Naive thymus-derived CD4-positive, alpha-beta T cell (primary cell): ENCODE measurements at regions of chr15 and their contacts with region 1.

Region 1: DNA sequence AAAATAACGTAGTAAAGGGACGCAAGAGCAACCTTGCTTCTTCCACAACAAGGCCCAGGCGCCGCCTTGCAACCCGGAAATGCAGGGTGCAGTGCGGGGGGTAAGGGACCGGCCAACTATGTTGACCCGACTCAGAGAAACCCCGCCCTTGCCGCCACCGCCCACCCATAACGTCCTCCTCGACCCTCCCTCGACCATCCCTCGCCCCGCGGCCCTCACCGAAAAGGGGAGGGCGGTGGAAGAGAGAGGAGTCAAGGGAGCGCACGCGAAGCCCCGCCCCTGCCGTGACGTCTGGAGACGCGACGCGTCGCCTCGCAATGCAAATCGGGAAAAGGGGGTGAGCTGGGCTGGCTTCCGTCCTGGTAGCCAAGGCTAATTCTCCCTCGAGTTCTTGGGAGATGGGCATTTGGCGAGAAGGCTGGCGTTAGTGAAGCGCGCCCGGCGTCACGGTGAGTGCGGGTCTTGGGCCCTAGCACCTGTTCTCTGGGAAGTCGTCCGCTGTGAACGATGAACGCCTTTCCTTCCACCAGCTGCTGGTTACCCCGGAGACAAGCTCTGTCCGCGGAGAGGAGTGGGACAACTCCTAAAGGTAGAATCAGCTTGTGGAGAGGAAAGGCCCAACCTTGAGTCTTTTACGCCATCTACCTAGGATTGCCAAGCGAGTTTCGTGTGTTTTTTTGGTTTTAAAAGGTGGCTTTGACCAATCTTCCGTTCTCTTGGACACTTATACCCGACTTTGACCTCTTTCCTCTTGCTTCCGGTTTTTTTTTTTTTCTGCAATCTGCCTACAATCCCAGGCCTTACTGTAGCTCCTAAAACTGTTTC is at the start of gene USP8:
- DNase-seq: peak; percentile 88 to 95 (median 93)
- ATAC-seq: peak; percentile 98
- H3K4me3 ChIP-seq: peak within 1 kb of the TSS; percentile 91
- H3K4me3 Mint-ChIP-seq: peak within 1 kb of the TSS; percentile 86 to 100 (median 98)
- H3K27ac ChIP-seq: peak within 1 kb of the TSS; percentile 93
- H3K27ac Mint-ChIP-seq: peak within 1 kb of the TSS; percentile 91 to 99 (median 97)
- H3K4me1 ChIP-seq: peaks cover 8 to 20% of the 10 kb centered on the region in 2 donors
- H3K4me1 Mint-ChIP-seq: peaks cover 23 to 59% (median 34%) of the 10 kb centered on the region in 7 donors
- H3K27me3 ChIP-seq: no peaks in the 10 kb centered on the region
- H3K27me3 Mint-ChIP-seq: no peaks in the 10 kb centered on the region
- total RNA-seq, gene USP8: 52.8 to 61.8 (median 57.1) TPM

Region 2: DNA sequence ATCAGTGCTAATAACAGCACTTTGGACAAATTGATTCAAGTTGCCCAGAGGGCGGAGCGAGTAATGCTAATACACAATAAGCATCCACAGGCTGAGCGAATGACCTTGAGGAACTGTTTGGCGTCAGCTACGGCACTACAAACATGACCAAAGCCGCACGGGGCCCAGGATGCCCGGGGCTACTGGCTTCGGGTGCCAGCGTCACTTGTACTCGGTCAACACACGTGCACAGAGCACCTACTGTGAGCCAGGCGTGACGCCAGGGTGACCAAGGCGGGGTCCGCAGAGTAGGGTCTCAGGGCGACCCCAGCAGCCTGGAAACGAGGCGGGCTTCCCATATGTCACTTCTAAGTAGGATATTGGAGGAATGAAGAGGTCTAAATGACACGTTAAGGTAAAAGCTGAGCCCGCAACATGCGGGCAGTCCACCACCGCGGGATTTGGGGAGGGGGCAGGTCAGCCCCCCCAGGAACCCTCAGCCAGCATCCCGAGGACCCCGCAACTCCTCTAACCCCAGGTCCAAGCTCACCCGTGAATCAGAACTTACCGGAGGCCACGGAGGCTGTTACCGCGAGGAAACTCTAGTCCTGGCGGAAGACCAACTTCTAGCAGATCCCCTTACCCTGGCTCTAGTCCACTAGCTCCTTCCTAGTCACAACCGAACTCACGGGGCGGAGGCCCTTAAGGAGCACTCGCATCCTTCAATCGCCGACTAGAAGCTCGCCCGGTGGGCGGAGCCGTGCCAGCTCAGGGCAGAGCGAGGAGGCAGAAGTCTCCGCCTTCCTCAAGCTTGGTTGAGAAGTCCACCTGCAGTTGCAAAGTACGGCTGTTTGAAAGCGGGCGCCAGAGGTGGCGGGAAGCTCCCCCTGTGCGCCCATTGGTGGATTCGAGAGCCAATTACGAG is 1613.6 kb before region 1 on chr15 and contains the start of gene CEP152:
- CTCF ChIA-PET with region 1: no interaction called
- POLR2A ChIA-PET with region 1: no interaction called
- intact Hi-C with region 1: loop called in 1 of 2 experiments (anchors 1 kb)
- DNase-seq: peak; percentile 91 to 99 (median 98)
- ATAC-seq: peak; percentile 98
- H3K4me3 ChIP-seq: peak within 1 kb of the TSS; percentile 78
- H3K4me3 Mint-ChIP-seq: peak within 1 kb of the TSS; percentile 82 to 96 (median 89)
- H3K27ac ChIP-seq: peak within 1 kb of the TSS; percentile 76
- H3K27ac Mint-ChIP-seq: peak within 1 kb of the TSS; percentile 14 to 96 (median 87)
- H3K4me1 ChIP-seq: peaks cover 9 to 13% of the 10 kb centered on the region in 2 donors
- H3K4me1 Mint-ChIP-seq: peaks cover 12 to 38% (median 33%) of the 10 kb centered on the region in 7 donors
- H3K27me3 ChIP-seq: no peaks in the 10 kb centered on the region
- H3K27me3 Mint-ChIP-seq: peaks cover 0 to 24% (median 0%) of the 10 kb centered on the region in 5 donors
- total RNA-seq, gene CEP152: 6.2 to 26.3 (median 17.0) TPM

Region 3: DNA sequence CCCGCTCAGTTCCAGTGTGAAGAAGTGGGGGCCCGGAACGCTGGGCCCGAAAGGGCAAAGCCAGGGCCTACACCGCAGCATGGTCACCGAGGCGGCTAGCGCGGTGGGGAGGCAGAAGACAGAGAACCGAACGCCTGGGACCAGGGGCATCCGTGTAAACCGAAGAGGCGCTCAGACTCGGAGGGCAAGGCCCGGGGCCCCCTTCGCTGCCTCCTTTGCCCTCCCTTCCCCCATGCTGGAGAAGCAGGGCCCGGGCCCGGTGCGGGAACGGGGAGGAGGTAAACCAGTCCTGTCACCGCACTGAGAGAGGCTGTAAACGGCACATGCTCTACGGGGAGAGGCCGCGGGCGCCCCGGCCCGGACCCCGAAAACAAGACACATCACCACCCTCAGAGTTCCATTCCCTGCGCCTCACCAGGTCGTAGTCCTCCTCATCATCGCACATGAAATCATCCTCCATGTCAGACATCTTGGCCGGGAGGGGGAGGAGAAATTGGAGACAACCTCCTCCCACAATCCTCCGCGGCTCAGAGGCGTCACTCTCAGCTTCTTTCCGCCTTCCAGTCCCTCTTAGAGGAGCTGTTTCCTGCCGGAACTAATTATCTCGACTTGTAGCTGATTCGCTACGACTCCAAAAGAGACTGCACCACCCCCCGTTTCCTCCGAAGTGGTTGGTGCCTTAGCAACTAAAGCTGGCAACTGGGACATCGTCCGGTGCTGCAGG is 1269.0 kb before region 1 on chr15 and contains the start of gene COPS2:
- CTCF ChIA-PET with region 1: no interaction called
- POLR2A ChIA-PET with region 1: interaction called, 3 read pairs
- intact Hi-C with region 1: loop called (anchors 1 kb)
- DNase-seq: peak; percentile 69 to 96 (median 94)
- ATAC-seq: peak; percentile 99
- H3K4me3 ChIP-seq: peak within 1 kb of the TSS; percentile 88
- H3K4me3 Mint-ChIP-seq: peak within 1 kb of the TSS; percentile 95 to 100 (median 98)
- H3K27ac ChIP-seq: peak within 1 kb of the TSS; percentile 93
- H3K27ac Mint-ChIP-seq: peak within 1 kb of the TSS; percentile 93 to 100 (median 97)
- H3K4me1 ChIP-seq: peaks cover 9 to 25% of the 10 kb centered on the region in 2 donors
- H3K4me1 Mint-ChIP-seq: peaks cover 40 to 72% (median 59%) of the 10 kb centered on the region in 7 donors
- H3K27me3 ChIP-seq: no peaks in the 10 kb centered on the region
- H3K27me3 Mint-ChIP-seq: no peaks in the 10 kb centered on the region
- total RNA-seq, gene COPS2: 51.0 to 91.5 (median 63.6) TPM

Region 4: GRCh38 chr15:49169880-49170597 is 1254.2 kb before region 1 on chr15 and contains the start of gene GALK2:
- CTCF ChIA-PET with region 1: no interaction called
- POLR2A ChIA-PET with region 1: no interaction called
- intact Hi-C with region 1: loop called in 1 of 2 experiments (anchors 1 kb)
- DNase-seq: peak; percentile 42 to 90 (median 75)
- ATAC-seq: peak; percentile 96
- H3K4me3 ChIP-seq: peak within 1 kb of the TSS; percentile 88
- H3K4me3 Mint-ChIP-seq: peak within 1 kb of the TSS; percentile 91 to 100 (median 98)
- H3K27ac ChIP-seq: peak within 1 kb of the TSS; percentile 88
- H3K27ac Mint-ChIP-seq: peak within 1 kb of the TSS; percentile 94 to 99 (median 98)
- H3K4me1 ChIP-seq: peaks cover 4 to 14% of the 10 kb centered on the region in 2 donors
- H3K4me1 Mint-ChIP-seq: peaks cover 24 to 56% (median 46%) of the 10 kb centered on the region in 7 donors
- H3K27me3 ChIP-seq: no peaks in the 10 kb centered on the region
- H3K27me3 Mint-ChIP-seq: no peaks in the 10 kb centered on the region
- total RNA-seq, gene GALK2: 19.4 to 36.6 (median 28.7) TPM

Region 5: GRCh38 chr15:50182219-50183013 is 241.9 kb before region 1 on chr15:
- CTCF ChIA-PET with region 1: no interaction called
- POLR2A ChIA-PET with region 1: no interaction called
- intact Hi-C with region 1: loop called in 1 of 2 experiments (anchors 10 kb)
- DNase-seq: peak in 6 of 9 donors; percentile 13 to 65 (median 21)
- ATAC-seq: peak; percentile 56
- H3K4me3 ChIP-seq: peak overlapping the region; percentile 67
- H3K4me3 Mint-ChIP-seq: peak overlapping the region; percentile 82 to 98 (median 90)
- H3K27ac ChIP-seq: no peak overlapping the region
- H3K27ac Mint-ChIP-seq: peak overlapping the region in 3 of 9 donors; percentile 39 to 85 (median 54)
- H3K4me1 ChIP-seq: peaks cover 0 to 6% of the 10 kb centered on the region in 2 donors
- H3K4me1 Mint-ChIP-seq: peaks cover 7 to 56% (median 12%) of the 10 kb centered on the region in 7 donors
- H3K27me3 ChIP-seq: no peaks in the 10 kb centered on the region
- H3K27me3 Mint-ChIP-seq: peaks cover 0 to 53% (median 38%) of the 10 kb centered on the region in 5 donors

Region 6: GRCh38 chr15:50247819-50248655 is 176.2 kb before region 1 on chr15:
- CTCF ChIA-PET with region 1: no interaction called
- POLR2A ChIA-PET with region 1: no interaction called
- intact Hi-C with region 1: loop called in 1 of 2 experiments (anchors 5 kb)
- DNase-seq: peak in 8 of 9 donors; percentile 18 to 62 (median 53)
- ATAC-seq: peak; percentile 93
- H3K4me3 ChIP-seq: peak overlapping the region; percentile 53
- H3K4me3 Mint-ChIP-seq: peak overlapping the region; percentile 55 to 88 (median 84)
- H3K27ac ChIP-seq: peak overlapping the region; percentile 53
- H3K27ac Mint-ChIP-seq: peak overlapping the region; percentile 89 to 99 (median 94)
- H3K4me1 ChIP-seq: peaks cover 8 to 12% of the 10 kb centered on the region in 2 donors
- H3K4me1 Mint-ChIP-seq: peaks cover 7 to 65% (median 22%) of the 10 kb centered on the region in 7 donors
- H3K27me3 ChIP-seq: no peaks in the 10 kb centered on the region
- H3K27me3 Mint-ChIP-seq: peaks cover 0 to 5% (median 0%) of the 10 kb centered on the region in 5 donors

Region 7: GRCh38 chr15:50496692-50497091 is 72.4 kb after region 1 on chr15:
- CTCF ChIA-PET with region 1: no interaction called
- POLR2A ChIA-PET with region 1: no interaction called
- intact Hi-C with region 1: no loop called
- DNase-seq: no peak
- ATAC-seq: no peak
- H3K4me3 ChIP-seq: no peak overlapping the region
- H3K4me3 Mint-ChIP-seq: no peak overlapping the region
- H3K27ac ChIP-seq: no peak overlapping the region
- H3K27ac Mint-ChIP-seq: peak overlapping the region in 1 of 9 donors; percentile 67
- H3K4me1 ChIP-seq: no peaks in the 10 kb centered on the region
- H3K4me1 Mint-ChIP-seq: no peaks in the 10 kb centered on the region
- H3K27me3 ChIP-seq: no peaks in the 10 kb centered on the region
- H3K27me3 Mint-ChIP-seq: no peaks in the 10 kb centered on the region

Region 8: DNA sequence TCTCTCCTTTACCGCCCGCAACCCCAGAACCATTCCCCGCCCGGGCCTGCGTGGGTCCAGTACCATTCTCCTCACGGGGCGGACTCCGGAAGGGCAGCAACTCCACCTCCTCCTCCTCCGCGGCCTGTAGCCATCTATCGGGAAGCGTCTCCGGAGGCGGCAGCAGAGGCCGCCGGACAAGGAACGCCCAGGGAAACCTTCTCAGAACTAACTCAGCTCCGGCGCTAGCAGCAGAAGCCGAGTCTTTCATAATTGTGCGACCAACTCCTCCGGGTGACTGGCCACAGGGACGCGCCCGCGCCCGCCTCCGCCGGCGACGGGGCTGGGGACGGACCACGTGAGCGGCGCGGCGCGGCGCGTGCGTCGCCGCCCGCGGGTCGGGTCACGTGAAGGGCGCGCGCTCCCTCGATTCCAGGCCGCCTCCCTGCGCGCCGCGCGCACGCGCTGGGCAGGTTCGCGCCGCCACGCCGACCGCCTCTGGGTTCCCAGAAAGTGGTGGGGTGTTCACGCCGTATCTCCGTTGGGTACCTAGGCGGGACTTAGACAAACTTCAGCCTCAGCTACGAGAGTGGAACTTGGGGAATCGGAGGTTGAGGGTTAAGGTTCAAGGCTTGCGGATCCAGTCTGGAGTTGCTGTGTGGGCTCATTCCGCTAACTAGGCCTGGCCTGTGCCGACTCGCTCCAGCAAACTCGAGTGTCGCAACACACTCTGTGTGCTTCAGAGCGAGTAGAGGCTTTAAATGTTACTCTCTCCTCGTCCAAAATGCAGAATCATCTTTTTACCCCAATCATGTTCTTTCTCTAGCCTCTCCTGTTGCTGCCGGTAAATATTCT is 262.4 kb after region 1 on chr15 and contains the start of gene TRPM7:
- CTCF ChIA-PET with region 1: no interaction called
- POLR2A ChIA-PET with region 1: interaction called, 3 read pairs
- intact Hi-C with region 1: loop called (anchors 1 kb)
- DNase-seq: peak; percentile 83 to 93 (median 90)
- ATAC-seq: peak; percentile 91
- H3K4me3 ChIP-seq: peak within 1 kb of the TSS; percentile 99
- H3K4me3 Mint-ChIP-seq: peak within 1 kb of the TSS; percentile 86 to 100 (median 97)
- H3K27ac ChIP-seq: peak within 1 kb of the TSS; percentile 93
- H3K27ac Mint-ChIP-seq: peak within 1 kb of the TSS; percentile 91 to 99 (median 97)
- H3K4me1 ChIP-seq: peaks cover 16 to 26% of the 10 kb centered on the region in 2 donors
- H3K4me1 Mint-ChIP-seq: peaks cover 42 to 62% (median 51%) of the 10 kb centered on the region in 7 donors
- H3K27me3 ChIP-seq: no peaks in the 10 kb centered on the region
- H3K27me3 Mint-ChIP-seq: no peaks in the 10 kb centered on the region
- total RNA-seq, gene TRPM7: 36.1 to 62.3 (median 45.2) TPM

Region 9: GRCh38 chr15:51803961-51804360 is 1379.7 kb after region 1 on chr15:
- CTCF ChIA-PET with region 1: no interaction called
- POLR2A ChIA-PET with region 1: no interaction called
- intact Hi-C with region 1: no loop called
- DNase-seq: no peak
- ATAC-seq: no peak
- H3K4me3 ChIP-seq: no peak overlapping the region
- H3K4me3 Mint-ChIP-seq: no peak overlapping the region
- H3K27ac ChIP-seq: no peak overlapping the region
- H3K27ac Mint-ChIP-seq: no peak overlapping the region
- H3K4me1 ChIP-seq: no peaks in the 10 kb centered on the region
- H3K4me1 Mint-ChIP-seq: peaks cover 0 to 2% (median 0%) of the 10 kb centered on the region in 7 donors
- H3K27me3 ChIP-seq: no peaks in the 10 kb centered on the region
- H3K27me3 Mint-ChIP-seq: no peaks in the 10 kb centered on the region